HEK293T (cell line): ENCODE measurements at regions of chr5 and their contacts with region 1.

Region 1: GRCh38 chr5:138989720-138990119 is 114.6 kb upstream of the LRRTM2 start:
- DNase-seq: no peak

Region 2: GRCh38 chr5:138874771-138875551 is 114.8 kb before region 1 on chr5 and contains the start of gene LRRTM2:
- CTCF ChIA-PET with region 1: no interaction called
- POLR2A ChIA-PET with region 1: no interaction called
- DNase-seq: peak; percentile 26

Region 3: DNA sequence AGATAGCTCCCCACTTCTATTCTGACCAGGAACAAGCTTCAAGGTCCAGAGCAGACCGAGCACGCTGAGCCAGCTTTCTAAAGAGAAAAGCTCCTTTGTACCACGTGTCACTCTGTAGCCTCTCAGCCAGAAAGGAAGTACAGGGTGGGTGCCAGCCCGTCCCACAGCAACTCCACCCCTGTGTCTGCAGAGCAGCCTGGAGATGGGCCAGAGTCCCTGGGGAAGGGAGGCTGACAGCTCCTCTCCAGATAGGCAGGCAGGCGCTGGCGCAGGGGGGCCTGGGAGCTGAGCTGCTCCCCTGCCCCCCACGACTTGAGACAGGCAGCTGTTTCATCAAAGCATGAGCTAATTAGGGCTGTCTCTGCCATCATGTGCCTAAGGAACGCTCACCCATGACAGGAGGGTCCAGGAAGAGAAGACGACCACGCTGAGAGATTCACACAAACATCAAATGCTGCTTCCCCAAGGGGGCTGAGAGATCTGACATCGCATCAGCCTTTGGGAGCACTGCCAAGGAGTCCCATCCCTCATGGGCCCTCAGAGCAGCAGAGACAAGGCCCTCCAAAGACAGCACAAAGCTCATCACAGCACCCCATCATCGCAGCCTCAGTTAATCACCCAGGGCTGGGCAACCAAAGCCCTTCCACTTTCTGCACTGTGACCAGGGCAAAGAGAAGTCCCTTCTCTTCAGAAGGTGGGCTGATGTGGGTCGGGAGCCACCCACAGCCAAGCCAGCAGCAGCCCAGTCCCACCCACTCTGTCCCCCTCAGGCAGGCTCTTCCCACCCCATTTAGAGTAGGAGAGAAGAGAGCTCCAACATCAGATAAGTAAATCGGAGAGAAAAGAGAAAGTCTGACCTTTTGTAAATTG is 36.1 kb before region 1 on chr5:
- CTCF ChIA-PET with region 1: interaction called, 13 read pairs
- POLR2A ChIA-PET with region 1: no interaction called
- DNase-seq: no peak